ENCODE measurements at regions of chrX and their contacts with region 1.

Region 1: DNA sequence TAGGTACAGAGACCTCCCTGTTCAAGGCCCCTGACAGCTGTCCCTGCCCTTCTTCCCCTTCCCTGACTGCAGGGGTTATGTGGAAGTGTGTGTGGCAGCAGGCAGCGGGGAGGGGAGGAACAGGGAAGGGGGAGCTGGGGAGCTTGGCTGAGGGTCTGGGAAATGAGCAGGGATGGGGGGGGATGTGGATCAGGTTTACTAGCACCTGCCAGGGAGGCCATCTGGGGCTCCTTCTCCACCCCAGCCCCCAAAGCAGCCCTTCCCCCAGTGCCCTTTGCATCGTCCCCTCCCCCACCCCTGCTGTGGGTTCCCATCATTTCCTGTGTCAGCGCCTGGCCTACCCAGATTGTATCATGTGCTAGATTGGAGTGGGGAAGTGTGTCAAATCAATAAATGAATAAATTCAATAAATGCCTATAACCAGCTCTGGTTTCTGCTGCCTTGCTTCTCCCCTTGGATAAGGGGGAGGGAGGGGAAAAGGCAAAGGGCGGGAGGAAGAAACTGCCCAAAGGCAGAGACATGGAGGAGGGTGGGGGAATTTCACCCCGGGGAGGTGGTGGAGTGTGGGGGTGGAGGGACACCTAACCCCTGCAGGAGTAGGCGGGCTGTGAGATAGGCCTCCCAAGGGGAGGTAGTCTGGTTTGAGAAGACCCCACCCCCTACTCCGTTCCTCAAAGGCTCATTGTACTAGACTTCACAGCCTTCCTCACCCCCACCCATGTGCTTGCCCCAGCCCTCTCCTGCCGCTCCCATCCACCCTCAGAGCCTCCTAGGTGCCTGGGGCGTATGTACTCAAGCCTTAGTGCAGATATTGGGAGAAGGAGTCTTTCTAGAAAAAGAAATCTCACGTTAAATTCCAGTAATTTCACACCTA is 3.2 kb downstream of the CXorf65 start:
- DNase-seq: peak; percentile 63
- H3K4me3 Mint-ChIP-seq: peak overlapping the region; percentile 74
- H3K27ac Mint-ChIP-seq: peak overlapping the region; percentile 86
- H3K4me1 Mint-ChIP-seq: peaks cover 67% of the 10 kb centered on the region
- H3K27me3 Mint-ChIP-seq: no peaks in the 10 kb centered on the region

Region 2: DNA sequence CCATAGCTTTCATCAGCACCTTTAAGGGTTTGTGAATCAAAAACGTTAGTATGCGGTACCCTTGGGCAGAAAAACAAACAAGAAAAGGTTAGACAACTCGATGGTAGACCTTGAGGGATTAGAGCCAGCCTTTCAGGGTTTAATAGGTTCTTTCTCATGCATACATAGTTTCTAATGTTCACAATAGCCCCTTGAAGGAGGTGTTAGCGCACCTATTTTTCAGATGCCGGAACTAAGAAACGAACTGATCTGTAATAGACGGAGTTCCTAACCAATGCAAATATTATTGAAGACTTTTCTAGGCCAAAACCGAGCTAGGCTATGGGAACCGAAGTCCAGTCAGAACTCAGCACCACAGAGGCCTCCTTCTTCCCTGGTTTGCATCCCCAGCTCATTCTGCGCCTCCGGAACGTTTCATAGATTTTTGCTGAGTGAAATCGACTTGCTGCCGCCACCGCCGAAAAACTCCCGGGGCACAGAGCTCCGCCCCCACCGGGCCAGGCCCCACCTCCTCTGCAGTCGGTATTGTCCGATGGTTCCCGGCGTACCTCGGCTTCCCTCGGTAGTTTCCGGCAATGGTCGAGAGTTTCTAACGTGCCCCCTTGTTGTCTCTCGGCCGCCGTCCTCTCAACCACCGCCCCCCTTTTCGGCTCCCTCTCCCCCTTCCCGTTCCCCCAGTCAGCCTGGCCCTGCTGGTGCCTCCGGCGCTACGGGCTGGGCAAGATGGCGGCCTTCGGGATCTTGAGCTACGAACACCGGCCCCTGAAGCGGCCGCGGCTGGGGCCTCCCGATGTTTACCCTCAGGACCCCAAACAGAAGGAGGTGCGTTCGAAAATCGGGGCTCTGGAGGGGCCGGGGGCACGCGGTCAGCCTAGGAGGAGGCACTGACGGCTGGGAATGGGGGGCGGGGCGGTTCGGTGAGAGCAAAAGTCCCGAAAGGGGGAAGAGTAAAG is 15.0 kb after region 1 on chrX and contains the start of gene MED12:
- CTCF ChIA-PET with region 1: interaction called, 10 read pairs
- POLR2A ChIA-PET with region 1: interaction called, 105 read pairs
- DNase-seq: peak; percentile 84
- H3K4me3 Mint-ChIP-seq: peak within 1 kb of the TSS; percentile 77
- H3K27ac Mint-ChIP-seq: peak within 1 kb of the TSS; percentile 78
- H3K4me1 Mint-ChIP-seq: peaks cover 28% of the 10 kb centered on the region
- H3K27me3 Mint-ChIP-seq: no peaks in the 10 kb centered on the region
- total RNA-seq, gene MED12: 56.5 to 61.3 TPM

Region 3: GRCh38 chrX:71128915-71129765 is 25.8 kb after region 1 on chrX:
- CTCF ChIA-PET with region 1: interaction called, 23 read pairs
- POLR2A ChIA-PET with region 1: interaction called, 13 read pairs
- DNase-seq: peak; percentile 77
- H3K4me3 Mint-ChIP-seq: no peak overlapping the region
- H3K27ac Mint-ChIP-seq: peak overlapping the region; percentile 16
- H3K4me1 Mint-ChIP-seq: peaks cover 16% of the 10 kb centered on the region
- H3K27me3 Mint-ChIP-seq: no peaks in the 10 kb centered on the region

Region 4: DNA sequence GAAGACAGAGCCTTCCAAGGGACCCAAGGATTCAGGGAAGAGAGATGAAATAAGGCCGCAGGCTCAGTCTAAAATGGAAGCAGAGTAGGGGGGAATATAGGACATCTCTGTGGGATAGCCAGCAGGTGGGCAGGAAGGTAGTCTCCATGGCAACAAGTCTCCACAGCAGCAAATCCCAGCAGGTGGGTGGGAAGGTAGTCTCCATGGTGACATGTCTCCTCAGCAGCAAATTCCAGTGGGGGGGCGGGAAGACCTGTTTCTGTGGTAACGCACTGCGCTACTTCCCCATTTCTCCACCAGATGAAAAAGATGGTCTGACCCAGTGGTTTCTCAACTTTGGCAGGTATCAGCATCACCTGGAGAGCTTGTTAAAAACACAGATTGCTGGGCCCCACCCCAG is 59.6 kb after region 1 on chrX:
- CTCF ChIA-PET with region 1: no interaction called
- POLR2A ChIA-PET with region 1: no interaction called
- DNase-seq: no peak
- H3K4me3 Mint-ChIP-seq: no peak overlapping the region
- H3K27ac Mint-ChIP-seq: no peak overlapping the region
- H3K4me1 Mint-ChIP-seq: peaks cover 7% of the 10 kb centered on the region
- H3K27me3 Mint-ChIP-seq: no peaks in the 10 kb centered on the region

Measured in activated CD4-positive, alpha-beta memory T cell treated with anti-CD3 and anti-CD28 coated beads, Interleukin-2, amount 10 ng/mL, durations not matched to agents 7 days and 5 days (primary cell).